ENCODE measurements at regions of chr15 and their contacts with region 1.

Region 1: DNA sequence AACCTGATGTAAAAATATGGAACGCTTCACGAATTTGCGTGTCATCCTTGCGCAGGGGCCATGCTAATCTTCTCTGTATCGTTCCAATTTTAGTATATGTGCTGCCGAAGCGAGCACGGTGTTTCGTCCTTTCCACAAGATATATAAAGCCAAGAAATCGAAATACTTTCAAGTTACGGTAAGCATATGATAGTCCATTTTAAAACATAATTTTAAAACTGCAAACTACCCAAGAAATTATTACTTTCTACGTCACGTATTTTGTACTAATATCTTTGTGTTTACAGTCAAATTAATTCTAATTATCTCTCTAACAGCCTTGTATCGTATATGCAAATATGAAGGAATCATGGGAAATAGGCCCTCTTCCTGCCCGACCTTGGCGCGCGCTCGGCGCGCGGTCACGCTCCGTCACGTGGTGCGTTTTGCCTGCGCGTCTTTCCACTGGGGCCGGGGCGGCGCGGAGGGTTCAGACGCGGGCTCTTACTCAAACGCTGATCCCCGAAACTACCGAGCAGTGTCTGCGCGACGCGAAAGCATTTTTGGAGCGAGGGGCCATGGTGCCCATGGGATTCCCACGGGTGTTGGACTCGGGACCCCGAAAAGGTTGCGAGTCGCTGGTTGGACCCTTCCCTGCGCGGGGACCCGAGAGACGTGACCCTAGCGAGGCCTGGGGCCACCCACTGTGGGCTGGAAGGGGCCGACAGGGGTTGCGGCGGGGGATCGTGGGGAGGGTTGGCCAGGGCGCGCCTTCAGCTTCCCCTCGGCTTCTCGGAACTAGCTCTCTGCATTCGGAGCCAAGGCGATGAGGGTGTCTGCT is at the start of gene RNU6-1:
- DNase-seq: peak; percentile 94
- H3K4me3 Mint-ChIP-seq: peak within 1 kb of the TSS; percentile 89
- H3K27ac Mint-ChIP-seq: peak within 1 kb of the TSS; percentile 93
- H3K4me1 Mint-ChIP-seq: peaks cover 24% of the 10 kb centered on the region
- H3K27me3 Mint-ChIP-seq: peaks cover 15% of the 10 kb centered on the region
- total RNA-seq, gene RNU6-1: not detected

Region 2: GRCh38 chr15:67065444-67066093 is 774.6 kb before region 1 on chr15 and contains the start of gene SMAD3:
- CTCF ChIA-PET with region 1: no interaction called
- intact Hi-C with region 1: loop called (anchors 5 kb)
- DNase-seq: peak; percentile 80
- H3K4me3 Mint-ChIP-seq: peak within 1 kb of the TSS; percentile 95
- H3K27ac Mint-ChIP-seq: peak within 1 kb of the TSS; percentile 89
- H3K4me1 Mint-ChIP-seq: peaks cover 50% of the 10 kb centered on the region
- H3K27me3 Mint-ChIP-seq: peaks cover 17% of the 10 kb centered on the region
- total RNA-seq, gene SMAD3: 35.1 to 39.2 TPM

Region 3: DNA sequence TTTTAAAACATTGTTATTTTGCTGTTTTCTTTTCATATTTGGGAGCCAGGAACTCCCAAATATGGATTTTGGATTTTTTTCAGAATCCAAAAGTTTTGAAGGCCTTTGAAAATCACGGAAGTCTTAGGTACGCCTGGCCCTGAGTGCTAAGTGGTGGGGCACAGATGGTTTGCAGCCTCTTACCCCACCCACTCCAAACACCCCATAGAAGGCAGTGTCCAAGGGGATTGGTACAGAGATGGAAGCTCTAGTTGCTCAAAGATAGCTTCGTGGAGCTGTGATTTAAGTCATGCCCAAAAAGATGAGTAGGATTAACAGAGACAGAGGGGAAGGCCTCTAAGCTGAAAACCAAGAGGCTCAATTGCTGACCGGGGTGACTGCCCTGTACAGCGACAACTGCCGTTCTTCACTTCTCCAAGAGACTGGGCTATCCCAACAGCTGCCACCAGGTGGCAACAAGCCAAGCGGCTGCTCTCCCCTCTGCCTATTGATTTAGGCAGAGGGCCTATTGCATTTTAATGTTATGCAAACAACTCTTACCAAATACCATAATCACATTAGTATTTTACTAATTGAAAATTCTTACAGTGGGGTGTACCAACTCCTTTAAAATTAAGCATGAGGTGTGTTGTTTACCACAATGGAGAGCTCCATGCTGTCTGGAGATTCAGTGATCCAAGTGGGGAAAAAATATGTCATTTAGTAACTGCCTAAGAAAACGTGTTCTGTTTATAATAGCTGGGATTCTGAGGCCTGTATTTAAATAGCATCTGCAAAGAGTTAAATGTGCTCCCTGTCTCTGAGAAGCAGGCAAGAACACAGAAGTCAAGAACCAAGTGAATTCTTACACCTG is 383.2 kb before region 1 on chr15:
- CTCF ChIA-PET with region 1: interaction called, 46 read pairs
- intact Hi-C with region 1: loop called (anchors 1 kb)
- DNase-seq: peak; percentile 91
- H3K4me3 Mint-ChIP-seq: no peak overlapping the region
- H3K27ac Mint-ChIP-seq: no peak overlapping the region
- H3K4me1 Mint-ChIP-seq: peaks cover 3% of the 10 kb centered on the region
- H3K27me3 Mint-ChIP-seq: no peaks in the 10 kb centered on the region

Region 4: DNA sequence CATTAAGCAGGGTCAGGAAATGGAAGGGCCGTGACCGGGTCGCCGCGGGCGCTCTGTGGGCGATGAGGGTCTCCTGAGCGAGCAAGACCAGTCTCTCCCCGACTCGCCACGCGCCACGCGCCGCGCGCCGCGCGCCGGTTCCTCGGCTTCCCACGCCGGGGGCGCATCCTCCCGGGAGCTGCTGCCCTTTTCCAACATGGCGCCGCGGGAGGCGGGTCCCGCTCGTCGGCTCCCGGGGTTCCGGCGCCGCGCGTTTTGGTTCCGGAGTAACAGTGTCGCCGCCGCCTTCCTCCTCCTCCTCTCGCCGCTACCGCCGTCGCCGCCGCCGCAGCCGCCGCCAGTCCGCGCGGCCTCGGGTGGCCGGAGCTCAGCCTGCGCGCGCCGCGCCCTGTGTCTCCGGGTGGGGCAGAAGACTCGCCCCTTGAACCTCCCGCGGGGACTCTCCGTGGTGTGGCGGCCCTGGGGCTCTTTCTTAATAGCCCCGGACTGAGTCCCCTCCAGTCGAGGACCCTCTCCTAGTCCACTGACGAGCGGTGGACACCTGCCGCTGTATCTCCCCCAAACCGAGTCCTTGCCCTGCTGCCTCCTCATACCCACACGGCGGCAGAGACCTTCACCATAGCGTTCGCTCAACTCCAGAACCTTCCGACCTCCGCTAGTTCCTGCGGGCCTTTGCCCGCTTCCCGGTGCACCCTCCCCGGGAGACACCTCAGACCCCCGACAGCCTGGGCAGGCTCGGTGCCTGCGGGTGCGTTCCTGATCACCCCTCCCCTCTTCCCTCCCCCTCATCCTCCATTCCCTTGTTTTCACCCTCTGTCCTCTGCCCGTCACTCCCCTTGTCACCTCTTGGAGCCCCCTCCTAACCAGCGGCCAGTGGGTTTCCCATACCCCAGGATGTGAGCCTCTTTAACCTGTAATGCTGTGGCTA is 297.5 kb before region 1 on chr15 and contains the start of gene MAP2K5:
- CTCF ChIA-PET with region 1: interaction called, 3 read pairs
- intact Hi-C with region 1: loop called (anchors 1 kb)
- DNase-seq: peak; percentile 84
- H3K4me3 Mint-ChIP-seq: peak within 1 kb of the TSS; percentile 91
- H3K27ac Mint-ChIP-seq: peak within 1 kb of the TSS; percentile 95
- H3K4me1 Mint-ChIP-seq: peaks cover 47% of the 10 kb centered on the region
- H3K27me3 Mint-ChIP-seq: no peaks in the 10 kb centered on the region
- total RNA-seq, gene MAP2K5: 15.4 to 20.6 TPM

Region 5: DNA sequence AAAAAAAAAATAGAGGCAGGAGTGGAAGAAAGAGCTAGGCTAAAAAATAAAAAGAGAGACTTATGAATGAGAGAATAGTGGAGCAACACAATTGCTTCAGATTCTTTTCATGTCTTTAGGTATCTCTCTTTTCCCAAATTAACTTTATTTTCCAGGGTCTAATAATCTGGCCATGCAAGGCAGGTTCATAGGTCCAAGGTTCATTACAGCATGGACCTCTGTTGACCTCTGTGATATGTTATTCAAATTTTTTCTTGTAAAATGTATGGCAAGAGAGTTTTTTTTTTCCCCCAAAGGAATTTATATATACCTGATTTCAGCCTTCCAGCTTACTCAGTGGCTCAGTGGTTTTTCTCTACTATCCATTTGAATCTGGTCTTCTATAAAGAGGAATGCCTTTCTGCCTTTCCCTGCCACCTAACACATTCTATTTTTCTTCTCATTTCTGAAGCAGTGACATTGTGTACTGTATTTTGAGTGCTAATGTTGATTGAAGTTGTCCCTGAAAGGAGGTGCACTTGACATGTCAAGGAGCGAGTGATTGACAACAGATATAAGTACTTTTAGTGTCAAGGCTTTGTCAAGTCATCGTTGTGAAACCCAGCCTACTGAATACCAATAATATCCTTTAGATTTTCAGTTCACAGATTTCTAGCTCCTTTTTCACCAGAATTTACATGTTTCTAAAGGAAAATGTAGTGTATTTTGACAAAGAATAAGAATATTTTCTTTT is 179.1 kb before region 1 on chr15:
- CTCF ChIA-PET with region 1: no interaction called
- intact Hi-C with region 1: no loop called
- DNase-seq: no peak
- H3K4me3 Mint-ChIP-seq: no peak overlapping the region
- H3K27ac Mint-ChIP-seq: no peak overlapping the region
- H3K4me1 Mint-ChIP-seq: no peaks in the 10 kb centered on the region
- H3K27me3 Mint-ChIP-seq: no peaks in the 10 kb centered on the region

Region 6: GRCh38 chr15:68053701-68054627 is 213.8 kb after region 1 on chr15 and contains the start of gene PIAS1:
- CTCF ChIA-PET with region 1: no interaction called
- intact Hi-C with region 1: loop called (anchors 5 kb)
- DNase-seq: peak; percentile 95
- H3K4me3 Mint-ChIP-seq: peak within 1 kb of the TSS; percentile 86
- H3K27ac Mint-ChIP-seq: peak within 1 kb of the TSS; percentile 89
- H3K4me1 Mint-ChIP-seq: peaks cover 36% of the 10 kb centered on the region
- H3K27me3 Mint-ChIP-seq: peaks cover 11% of the 10 kb centered on the region
- total RNA-seq, gene PIAS1: 29.8 to 33.4 TPM